A549 (cell line): ENCODE measurements at regions of chr1 and their contacts with region 1.

Region 1: DNA sequence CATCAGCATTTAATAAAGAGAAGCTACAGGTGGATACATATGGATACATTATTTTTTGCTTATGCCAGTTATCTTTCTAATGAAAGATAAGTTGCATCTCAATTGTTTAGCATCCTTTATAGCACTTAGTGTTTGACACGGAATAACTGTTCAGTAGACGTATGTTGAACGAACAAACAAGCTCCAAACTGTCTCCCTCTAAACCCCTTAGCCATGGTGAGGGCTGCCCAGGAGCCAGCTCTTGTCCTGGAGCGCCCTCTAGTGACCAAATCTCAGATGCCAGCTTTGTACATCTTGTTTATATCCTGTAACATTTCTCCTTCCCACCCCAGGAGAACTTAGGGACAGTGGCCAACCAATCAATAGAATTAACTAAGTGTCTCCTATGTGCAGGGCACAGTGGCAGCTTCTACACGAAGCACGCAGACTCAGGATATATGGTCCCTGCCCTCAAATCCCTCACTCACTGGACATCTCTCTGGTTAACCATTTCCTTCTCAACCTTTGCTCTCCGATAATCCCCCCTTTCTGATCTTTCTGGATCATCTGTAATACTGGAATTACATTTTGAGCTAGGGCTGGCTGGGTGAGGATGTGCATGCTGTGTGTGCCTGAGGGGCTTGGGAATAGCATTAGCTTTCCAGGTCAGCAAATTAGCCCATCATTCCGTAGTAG is 22.9 kb downstream of the KCNA10 start:
- DNase-seq: peak; percentile 66 to 72
- ATAC-seq: peak; percentile 87 to 97
- H3K4me3 ChIP-seq: no peak overlapping the region
- H3K27ac ChIP-seq: no peak overlapping the region
- H3K4me1 ChIP-seq: no peaks in the 10 kb centered on the region
- CTCF ChIP-seq: peak; percentile 89
- EP300 ChIP-seq: no peak
- POLR2A ChIP-seq: no peak
- RAD21 ChIP-seq: peak; percentile 91 to 97

Region 2: DNA sequence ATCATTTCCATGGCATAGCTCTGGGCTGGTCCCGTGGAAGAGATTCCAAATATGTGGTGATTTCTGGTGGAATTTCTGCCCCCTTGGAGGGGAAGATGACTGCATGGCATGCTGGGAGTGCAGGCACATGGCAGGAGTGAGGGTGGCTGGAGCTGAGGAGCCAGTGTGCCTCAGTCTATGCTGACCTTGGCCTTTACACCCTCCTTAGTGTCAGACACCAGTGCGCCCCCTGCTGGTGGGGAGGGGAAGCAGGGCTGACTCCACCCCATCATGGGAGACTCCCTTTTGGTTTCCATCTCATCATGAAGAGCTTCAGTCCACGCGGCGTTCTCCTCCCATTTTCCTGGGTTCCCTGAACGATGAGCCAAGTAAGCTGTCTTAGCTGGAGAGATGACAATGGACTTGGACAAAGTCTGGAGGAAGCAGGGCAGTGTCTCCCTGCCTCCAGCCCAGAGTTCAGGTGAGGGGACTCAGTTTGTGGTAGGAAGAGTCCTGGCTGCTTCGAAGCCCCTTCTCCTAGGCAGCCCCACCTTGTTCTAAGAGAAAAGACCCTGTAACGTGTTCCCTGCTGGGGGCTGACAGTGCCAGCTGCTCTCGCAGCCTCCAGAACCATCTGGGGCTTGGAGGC is 435.9 kb before region 1 on chr1:
- CTCF ChIA-PET with region 1: no interaction called
- POLR2A ChIA-PET with region 1: no interaction called
- DNase-seq: peak; percentile 29 to 52
- ATAC-seq: peak; percentile 55 to 86; a peak in 3 of 6 replicates
- H3K4me3 ChIP-seq: no peak overlapping the region
- H3K27ac ChIP-seq: no peak overlapping the region
- H3K4me1 ChIP-seq: no peaks in the 10 kb centered on the region
- CTCF ChIP-seq: peak; percentile 52
- EP300 ChIP-seq: no peak
- POLR2A ChIP-seq: no peak
- RAD21 ChIP-seq: 0 out of 5 replicates have a peak, but pooled peaks of 1 of the 2 experiments have one; percentile 11

Region 3: DNA sequence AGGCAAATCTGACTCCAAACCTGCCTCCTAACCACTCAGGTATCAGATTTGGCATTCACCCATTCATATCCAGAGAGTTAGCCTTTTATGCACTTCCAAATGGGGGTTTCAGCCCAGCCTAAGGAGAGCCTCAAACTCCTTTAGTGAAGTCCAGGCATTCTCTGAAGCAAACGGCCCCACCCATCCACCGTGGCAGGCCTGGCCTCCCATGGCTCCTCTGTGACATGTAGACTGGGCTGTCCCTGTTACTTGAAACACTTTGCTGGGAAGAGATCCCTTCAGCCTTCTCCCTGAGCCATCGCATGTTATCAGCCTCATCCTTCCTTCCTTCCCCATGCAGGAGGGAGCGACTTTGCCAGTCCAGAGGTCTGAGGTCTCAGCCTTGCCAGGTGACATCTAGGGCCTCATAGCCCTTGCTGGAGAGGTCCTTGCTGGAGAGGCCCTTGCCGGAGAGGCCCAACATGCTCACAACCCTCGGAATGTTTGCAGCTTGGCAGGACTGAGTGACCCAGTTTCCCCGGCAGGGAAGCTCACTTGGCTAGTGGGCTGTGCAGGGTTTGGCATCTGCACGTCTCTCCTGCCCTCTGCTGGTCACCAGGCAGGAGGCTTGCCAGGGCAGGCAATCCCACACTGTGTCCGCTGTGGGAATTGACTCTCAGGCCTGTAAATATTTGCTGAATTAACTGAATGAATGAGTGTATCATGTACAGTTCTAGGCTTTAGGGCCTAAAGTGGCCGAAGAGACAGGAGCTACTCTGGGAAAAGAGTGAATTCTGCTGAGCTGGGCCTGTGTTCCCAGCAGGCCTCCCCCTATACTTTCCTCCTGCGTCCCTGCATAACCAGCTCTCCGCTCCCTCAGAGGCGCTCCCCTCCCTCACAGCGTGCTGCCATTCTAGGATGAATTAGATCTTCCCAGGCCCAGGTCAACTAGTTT is 183.6 kb before region 1 on chr1:
- CTCF ChIA-PET with region 1: interaction called, 21 read pairs
- POLR2A ChIA-PET with region 1: no interaction called
- DNase-seq: peak; percentile 42 to 69
- ATAC-seq: peak; percentile 97 to 100
- H3K4me3 ChIP-seq: no peak overlapping the region
- H3K27ac ChIP-seq: no peak overlapping the region
- H3K4me1 ChIP-seq: no peaks in the 10 kb centered on the region
- CTCF ChIP-seq: peak; percentile 82
- EP300 ChIP-seq: no peak
- POLR2A ChIP-seq: no peak
- RAD21 ChIP-seq: peak; percentile 95

Region 4: DNA sequence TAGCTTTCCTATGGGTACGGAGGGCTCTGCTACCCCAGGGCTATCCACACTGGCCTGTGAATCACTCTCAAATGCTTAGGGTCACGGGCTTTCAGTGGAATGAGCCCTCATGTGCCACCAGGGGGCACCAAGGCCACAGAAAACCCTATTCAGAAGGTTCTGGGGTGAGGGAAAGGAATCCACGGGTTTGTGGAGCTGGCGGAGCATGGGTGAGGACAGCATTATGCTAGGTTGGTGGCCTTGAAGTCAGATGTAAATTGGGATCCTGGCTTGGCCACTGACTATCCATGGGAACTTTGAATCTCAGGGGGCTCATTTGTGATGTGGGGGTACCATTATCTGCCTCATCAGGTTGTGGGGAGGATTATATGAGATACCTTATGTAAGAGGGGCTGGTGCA is 83.5 kb before region 1 on chr1:
- CTCF ChIA-PET with region 1: interaction called, 146 read pairs
- POLR2A ChIA-PET with region 1: interaction called, 9 read pairs
- DNase-seq: peak; percentile 57 to 63
- ATAC-seq: peak; percentile 91
- H3K4me3 ChIP-seq: no peak overlapping the region
- H3K27ac ChIP-seq: peak overlapping the region in 1 of 2 experiments; percentile 58; a peak in 1 of 6 replicates
- H3K4me1 ChIP-seq: peaks cover 10% of the 10 kb centered on the region
- CTCF ChIP-seq: peak; percentile 75
- EP300 ChIP-seq: no peak
- POLR2A ChIP-seq: no peak
- RAD21 ChIP-seq: peak; percentile 82 to 86

Region 5: DNA sequence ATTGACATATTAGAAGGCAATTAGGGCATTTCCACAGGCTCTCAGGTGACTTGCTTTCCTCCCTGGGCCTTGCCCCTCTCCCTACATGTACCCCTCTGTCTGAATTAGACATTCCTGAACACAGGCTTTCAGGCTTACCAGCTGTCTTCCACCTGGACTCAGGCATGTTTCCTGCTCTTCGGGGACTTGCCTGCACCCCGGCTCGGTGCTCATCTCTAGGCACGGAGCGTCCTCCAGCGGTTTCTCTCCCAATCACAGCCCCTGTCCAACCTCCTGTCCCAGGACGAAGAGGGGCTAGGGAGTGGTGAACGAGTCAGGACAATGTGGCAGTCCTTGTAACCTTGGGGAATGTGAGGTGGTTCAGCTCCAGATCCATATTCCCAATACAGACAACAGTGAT is 40.9 kb before region 1 on chr1:
- CTCF ChIA-PET with region 1: interaction called, 256 read pairs
- POLR2A ChIA-PET with region 1: no interaction called
- DNase-seq: no peak
- ATAC-seq: peak in 1 of 2 experiments; percentile 46; a peak in 2 of 6 replicates
- H3K4me3 ChIP-seq: no peak overlapping the region
- H3K27ac ChIP-seq: no peak overlapping the region
- H3K4me1 ChIP-seq: no peaks in the 10 kb centered on the region
- CTCF ChIP-seq: no peak
- EP300 ChIP-seq: no peak
- POLR2A ChIP-seq: no peak
- RAD21 ChIP-seq: no peak

Region 6: GRCh38 chr1:110477041-110477440 is 19.0 kb before region 1 on chr1:
- CTCF ChIA-PET with region 1: interaction called, 43 read pairs
- POLR2A ChIA-PET with region 1: interaction called, 4 read pairs
- DNase-seq: peak; percentile 74 to 81
- ATAC-seq: peak; percentile 89 to 92
- H3K4me3 ChIP-seq: no peak overlapping the region
- H3K27ac ChIP-seq: peak overlapping the region; percentile 66 to 82
- H3K4me1 ChIP-seq: peaks cover 32% of the 10 kb centered on the region
- CTCF ChIP-seq: no peak
- EP300 ChIP-seq: no peak
- POLR2A ChIP-seq: no peak
- RAD21 ChIP-seq: no peak

Region 7: DNA sequence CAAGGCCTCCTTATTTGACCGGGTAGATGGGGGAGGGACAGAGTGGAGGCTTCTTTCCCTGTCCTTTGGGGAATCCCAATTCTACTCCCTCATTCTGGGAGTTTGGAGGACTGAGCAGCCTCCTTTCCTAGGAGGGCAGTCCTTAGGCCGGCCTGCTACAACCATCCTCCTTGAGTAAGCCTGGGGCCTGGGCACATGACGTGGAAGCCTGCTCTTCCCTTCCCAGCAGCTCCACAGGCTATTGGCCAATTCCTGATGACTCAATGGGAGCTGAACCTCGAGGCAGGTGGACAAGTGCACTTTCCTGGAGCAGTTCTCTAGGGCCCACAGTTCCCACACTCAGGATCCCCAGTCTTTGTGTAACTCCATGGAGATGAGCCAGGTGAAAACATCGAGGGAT is 19.8 kb after region 1 on chr1:
- CTCF ChIA-PET with region 1: interaction called, 12 read pairs
- POLR2A ChIA-PET with region 1: no interaction called
- DNase-seq: no peak
- ATAC-seq: no peak
- H3K4me3 ChIP-seq: no peak overlapping the region
- H3K27ac ChIP-seq: no peak overlapping the region
- H3K4me1 ChIP-seq: no peaks in the 10 kb centered on the region
- CTCF ChIP-seq: no peak
- EP300 ChIP-seq: no peak
- POLR2A ChIP-seq: no peak
- RAD21 ChIP-seq: no peak

Region 8: DNA sequence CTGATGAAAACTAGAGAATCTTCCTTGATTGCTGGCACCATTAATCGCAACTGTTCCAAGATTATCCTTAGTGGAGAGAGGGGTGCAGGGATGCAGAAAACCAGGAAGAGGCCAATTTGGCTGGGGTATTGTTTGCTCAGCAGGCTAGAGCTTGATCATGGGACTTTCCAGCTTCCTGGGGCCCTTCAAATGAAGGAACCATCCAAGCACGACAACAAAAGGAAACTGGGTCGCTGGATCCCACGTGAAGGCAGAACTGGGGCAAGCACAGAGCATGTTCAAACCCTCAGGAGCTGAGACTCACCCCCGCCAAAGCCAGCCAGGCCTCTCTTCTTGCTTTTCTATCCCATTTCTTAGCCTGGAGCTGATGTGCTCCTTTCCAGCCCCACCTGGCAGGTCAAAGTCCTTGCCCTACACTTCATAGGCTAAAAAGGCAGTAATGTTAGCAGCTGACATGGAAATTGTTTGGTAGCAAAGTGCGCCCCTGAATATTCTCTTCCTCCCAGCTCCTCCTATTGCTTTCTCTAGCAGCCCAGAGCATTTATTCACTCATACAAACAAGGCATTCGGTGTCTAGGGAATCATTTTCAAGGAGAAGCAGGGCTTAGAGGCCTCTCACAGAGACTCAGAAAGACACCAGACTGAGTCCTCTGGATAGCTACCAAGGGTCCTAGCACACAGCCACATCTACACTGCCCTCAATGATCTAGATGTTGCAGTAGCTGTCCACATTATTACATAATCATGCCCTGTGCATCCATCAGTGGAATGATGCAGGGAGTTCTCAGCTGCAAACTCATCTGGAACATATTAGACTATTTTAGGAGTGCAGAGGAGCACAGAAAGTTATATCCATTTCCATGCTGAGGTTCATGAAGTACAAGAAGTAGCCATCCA is 98.6 kb after region 1 on chr1:
- CTCF ChIA-PET with region 1: no interaction called
- POLR2A ChIA-PET with region 1: no interaction called
- DNase-seq: no peak
- ATAC-seq: no peak
- H3K4me3 ChIP-seq: no peak overlapping the region
- H3K27ac ChIP-seq: no peak overlapping the region
- H3K4me1 ChIP-seq: no peaks in the 10 kb centered on the region
- CTCF ChIP-seq: no peak
- EP300 ChIP-seq: no peak
- POLR2A ChIP-seq: no peak
- RAD21 ChIP-seq: no peak

Region 9: DNA sequence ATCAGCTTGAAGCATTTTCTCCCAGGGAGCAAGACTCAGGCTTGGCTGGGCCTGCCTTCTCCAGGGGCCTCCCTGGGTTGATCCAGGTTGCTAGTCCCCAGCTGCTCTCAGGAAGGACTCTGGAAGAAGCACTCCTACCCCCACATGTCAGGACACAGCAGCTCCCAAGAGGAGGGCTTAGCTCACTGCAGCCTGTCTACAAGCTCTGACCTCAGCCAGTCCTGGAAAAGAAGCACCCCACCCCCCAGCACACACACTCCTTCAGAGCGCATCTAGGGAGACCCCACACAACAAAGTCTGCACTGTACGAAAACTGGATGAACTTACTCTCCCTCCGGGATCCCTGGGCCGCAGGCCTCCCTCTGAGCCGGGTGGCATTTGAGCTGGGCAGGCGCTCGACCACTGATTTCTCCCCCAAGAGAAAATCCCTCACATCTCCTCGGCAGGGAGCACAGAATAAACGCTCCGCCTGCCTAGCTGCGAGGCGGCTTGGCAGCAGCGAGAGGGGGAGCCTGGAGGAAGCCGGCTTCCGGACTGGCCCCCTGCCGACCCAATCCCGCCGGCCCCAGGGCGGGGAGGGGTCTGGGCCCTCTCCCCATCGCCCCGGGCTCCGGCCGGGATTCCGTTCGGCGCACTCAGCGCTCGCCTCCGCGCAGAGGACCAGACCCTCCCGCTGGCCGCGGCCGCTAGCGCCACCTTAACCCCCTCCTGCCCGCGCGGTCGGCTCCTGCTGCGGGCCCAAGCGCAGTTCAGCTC is 110.0 kb after region 1 on chr1 and contains the start of gene KCNA2:
- CTCF ChIA-PET with region 1: no interaction called
- POLR2A ChIA-PET with region 1: no interaction called
- DNase-seq: no peak
- ATAC-seq: peak; percentile 40 to 78; a peak in 4 of 6 replicates
- H3K4me3 ChIP-seq: peak within 1 kb of the TSS; percentile 56
- H3K27ac ChIP-seq: peak within 1 kb of the TSS in 1 of 2 experiments; percentile 16; a peak in 3 of 6 replicates
- H3K4me1 ChIP-seq: no peaks in the 10 kb centered on the region
- CTCF ChIP-seq: no peak
- EP300 ChIP-seq: no peak
- POLR2A ChIP-seq: no peak
- RAD21 ChIP-seq: no peak
- polyA plus RNA-seq, gene KCNA2: 0.05 TPM in 2 replicates

Region 10: GRCh38 chr1:110962892-110963690 is 467.0 kb after region 1 on chr1:
- CTCF ChIA-PET with region 1: no interaction called
- POLR2A ChIA-PET with region 1: no interaction called
- DNase-seq: peak; percentile 25 to 86
- ATAC-seq: peak; percentile 75 to 83
- H3K4me3 ChIP-seq: peak overlapping the region; percentile 73
- H3K27ac ChIP-seq: peak overlapping the region; percentile 89 to 98
- H3K4me1 ChIP-seq: no peaks in the 10 kb centered on the region
- CTCF ChIP-seq: no peak; the same call in 2 of the 3 replicates
- EP300 ChIP-seq: no peak
- POLR2A ChIP-seq: peak; percentile 31; the same call in 1 of the 2 replicates
- RAD21 ChIP-seq: no peak